GM12878 (cell line): ENCODE measurements at regions of chr20 and their contacts with region 1.

Region 1: GRCh38 chr20:6583134-6583738 is 184.2 kb upstream of the BMP2 start:
- DNase-seq: peak; percentile 25
- ATAC-seq: peak; percentile 96
- H3K4me3 ChIP-seq: no peak overlapping the region
- H3K27ac ChIP-seq: no peak overlapping the region
- H3K4me1 ChIP-seq: no peaks in the 10 kb centered on the region
- H3K27me3 ChIP-seq: no peaks in the 10 kb centered on the region
- CTCF ChIP-seq: peak; percentile 58 to 81 (median 63)
- EP300 ChIP-seq: no peak
- POLR2A ChIP-seq: no peak
- RAD21 ChIP-seq: peak; percentile 63

Region 2: GRCh38 chr20:5788385-5788895 is 794.8 kb before region 1 on chr20:
- CTCF ChIA-PET with region 1: no interaction called
- POLR2A ChIA-PET with region 1: no interaction called
- RAD21 ChIA-PET with region 1: no interaction called
- SMC1A ChIA-PET with region 1: no interaction called
- in situ Hi-C with region 1: no loop called
- intact Hi-C with region 1: no loop called
- DNase-seq: peak; percentile 66
- ATAC-seq: peak; percentile 100
- H3K4me3 ChIP-seq: no peak overlapping the region
- H3K27ac ChIP-seq: no peak overlapping the region
- H3K4me1 ChIP-seq: no peaks in the 10 kb centered on the region
- H3K27me3 ChIP-seq: no peaks in the 10 kb centered on the region
- CTCF ChIP-seq: peak; percentile 76 to 93 (median 87); a peak in 5 of 6 replicates
- EP300 ChIP-seq: no peak
- POLR2A ChIP-seq: no peak
- RAD21 ChIP-seq: peak; percentile 98

Region 3: DNA sequence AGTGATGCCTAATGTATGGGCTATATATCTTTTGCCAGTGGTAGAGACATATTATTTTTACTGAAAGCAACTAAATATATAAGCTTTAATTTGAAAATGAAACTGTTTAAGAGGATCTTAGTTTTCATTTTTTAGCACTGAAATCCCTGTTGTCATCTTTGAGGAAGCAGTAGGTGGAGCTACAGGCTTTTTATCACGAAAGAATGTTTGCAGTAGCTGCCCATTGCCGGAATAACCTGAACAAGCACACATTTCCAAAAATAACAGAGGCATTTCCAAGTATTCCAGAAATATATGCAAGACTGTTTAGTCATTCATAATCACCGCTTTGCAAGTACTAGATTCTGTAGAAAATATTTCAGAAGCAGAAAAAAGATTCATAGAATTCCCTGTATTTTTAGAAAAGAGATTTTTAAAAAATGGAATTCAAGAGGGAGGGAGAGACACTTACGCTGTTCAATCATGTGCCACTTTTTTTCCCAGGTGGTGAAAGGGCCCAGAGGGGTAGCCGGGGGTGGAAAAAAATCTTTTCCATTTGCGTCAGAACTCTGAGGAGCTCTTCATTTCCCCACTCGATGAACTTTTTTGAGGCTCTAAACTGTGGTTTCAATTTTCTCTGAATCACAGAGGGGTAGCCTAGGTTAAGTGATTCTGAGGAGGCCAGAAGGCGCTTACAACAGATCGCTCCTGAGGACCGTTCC is 317.9 kb before region 1 on chr20:
- CTCF ChIA-PET with region 1: interaction called, 10 read pairs
- POLR2A ChIA-PET with region 1: no interaction called
- RAD21 ChIA-PET with region 1: interaction called, 3 read pairs
- SMC1A ChIA-PET with region 1: interaction called, 7 read pairs
- in situ Hi-C with region 1: no loop called
- intact Hi-C with region 1: loop called (anchors 5 kb)
- DNase-seq: no peak
- ATAC-seq: peak; percentile 50; the same call in 2 of the 3 replicates
- H3K4me3 ChIP-seq: no peak overlapping the region
- H3K27ac ChIP-seq: no peak overlapping the region
- H3K4me1 ChIP-seq: no peaks in the 10 kb centered on the region
- H3K27me3 ChIP-seq: no peaks in the 10 kb centered on the region
- CTCF ChIP-seq: peak in 2 of 3 experiments; percentile 6 to 50; a peak in 2 of 6 replicates
- EP300 ChIP-seq: no peak
- POLR2A ChIP-seq: no peak
- RAD21 ChIP-seq: peak; percentile 40

Region 4: DNA sequence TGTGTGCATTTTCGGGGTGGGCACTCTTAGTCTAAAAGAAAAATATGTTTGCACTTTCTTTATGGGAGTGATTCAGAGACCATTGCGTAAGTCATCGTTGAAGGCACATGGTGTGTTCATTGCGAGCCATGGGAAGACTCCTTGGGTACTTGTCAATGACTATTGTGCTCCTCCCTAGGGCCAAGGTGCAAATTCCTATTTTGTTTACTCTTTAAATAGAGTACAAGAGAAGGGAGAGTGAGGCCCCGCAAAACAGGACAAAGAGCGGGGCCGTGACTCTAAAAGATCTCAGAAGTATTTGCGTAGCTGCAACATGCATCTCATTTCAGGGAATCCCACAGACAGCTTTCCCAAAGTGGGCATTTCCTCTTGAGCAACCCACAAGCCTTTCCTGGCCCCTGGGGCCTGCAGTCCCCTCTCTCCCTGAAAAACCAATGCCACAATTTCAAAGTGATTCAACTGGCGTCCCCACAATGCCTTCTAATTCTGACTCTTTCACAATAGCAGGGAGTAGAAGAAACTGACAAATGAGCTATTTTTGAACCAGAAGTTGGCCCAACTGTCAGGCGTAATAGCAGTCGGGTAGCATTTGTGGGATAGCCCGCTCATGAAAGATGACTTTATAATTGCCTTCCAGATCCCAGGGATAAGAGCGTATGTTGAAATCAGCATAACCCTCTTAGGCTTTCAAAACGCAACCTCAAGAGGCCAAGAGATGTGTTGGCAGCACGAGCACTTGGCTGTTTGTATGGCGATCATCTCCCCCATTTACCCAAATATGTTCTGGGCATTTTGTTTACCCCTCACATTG is 93.7 kb before region 1 on chr20:
- CTCF ChIA-PET with region 1: no interaction called
- POLR2A ChIA-PET with region 1: no interaction called
- RAD21 ChIA-PET with region 1: no interaction called
- SMC1A ChIA-PET with region 1: no interaction called
- in situ Hi-C with region 1: no loop called
- intact Hi-C with region 1: no loop called
- DNase-seq: no peak
- ATAC-seq: no peak
- H3K4me3 ChIP-seq: no peak overlapping the region
- H3K27ac ChIP-seq: no peak overlapping the region
- H3K4me1 ChIP-seq: no peaks in the 10 kb centered on the region
- H3K27me3 ChIP-seq: no peaks in the 10 kb centered on the region; a peak in 1 of 4 replicates
- CTCF ChIP-seq: no peak
- EP300 ChIP-seq: no peak
- POLR2A ChIP-seq: no peak
- RAD21 ChIP-seq: no peak

Region 5: DNA sequence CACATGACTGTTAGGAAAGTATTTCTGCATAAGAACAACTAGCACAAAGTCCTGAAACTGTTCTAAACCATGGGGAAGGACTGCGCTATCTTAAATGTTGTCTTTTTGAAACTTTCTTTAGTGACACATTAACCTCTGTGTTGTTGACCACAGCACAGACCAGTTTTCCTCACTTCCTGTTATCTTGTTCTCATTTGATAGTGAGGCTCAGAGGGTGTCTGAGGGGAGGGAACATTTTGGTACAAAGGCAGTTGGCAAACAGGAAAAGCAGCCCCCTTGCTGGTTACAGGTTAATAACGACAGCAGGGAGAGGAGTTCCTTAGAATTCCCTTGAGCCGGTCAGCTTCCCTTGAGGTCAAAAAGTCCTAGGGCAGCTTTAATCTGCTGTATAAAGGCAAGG is 40.8 kb after region 1 on chr20:
- CTCF ChIA-PET with region 1: interaction called, 33 read pairs
- POLR2A ChIA-PET with region 1: no interaction called
- RAD21 ChIA-PET with region 1: interaction called, 15 read pairs
- SMC1A ChIA-PET with region 1: interaction called, 109 read pairs
- in situ Hi-C with region 1: no loop called
- intact Hi-C with region 1: loop called (anchors 2 kb)
- DNase-seq: peak; percentile 66
- ATAC-seq: peak; percentile 96
- H3K4me3 ChIP-seq: no peak overlapping the region
- H3K27ac ChIP-seq: no peak overlapping the region
- H3K4me1 ChIP-seq: no peaks in the 10 kb centered on the region
- H3K27me3 ChIP-seq: no peaks in the 10 kb centered on the region
- CTCF ChIP-seq: no peak
- EP300 ChIP-seq: peak in 1 of 2 experiments; percentile 90; a peak in 3 of 4 replicates
- POLR2A ChIP-seq: no peak
- RAD21 ChIP-seq: no peak

Region 6: DNA sequence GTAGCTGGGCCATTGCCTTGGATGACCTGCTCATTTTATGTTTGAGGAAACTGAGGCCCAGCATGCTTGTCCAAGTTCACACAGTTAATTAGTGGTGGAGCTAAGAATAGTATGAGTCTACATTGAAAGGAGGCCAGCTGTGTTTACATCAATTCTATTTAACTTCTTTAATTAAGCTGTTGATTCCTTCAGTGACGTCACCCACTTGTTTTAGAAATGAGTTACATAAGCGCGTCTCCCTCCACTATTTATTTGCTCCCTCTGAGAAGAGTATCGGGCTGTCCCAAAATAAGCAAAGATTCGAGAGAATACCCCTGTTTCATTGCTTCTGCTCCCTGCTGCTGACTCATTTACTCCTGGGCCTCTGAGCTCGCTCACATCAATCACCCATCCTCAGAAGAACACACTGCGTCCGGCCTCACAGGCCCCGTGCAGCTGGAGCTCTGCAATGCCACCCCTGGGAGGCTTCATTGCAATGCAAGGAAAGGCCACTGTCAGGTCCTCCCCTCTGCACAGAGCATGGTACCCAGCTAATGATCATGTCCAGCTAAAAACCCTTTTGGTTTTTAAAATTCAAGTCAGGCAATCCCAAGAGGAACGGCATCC is 109.4 kb after region 1 on chr20:
- CTCF ChIA-PET with region 1: interaction called, 17 read pairs
- POLR2A ChIA-PET with region 1: no interaction called
- RAD21 ChIA-PET with region 1: interaction called, 6 read pairs
- SMC1A ChIA-PET with region 1: interaction called, 10 read pairs
- in situ Hi-C with region 1: no loop called
- intact Hi-C with region 1: no loop called
- DNase-seq: no peak
- ATAC-seq: peak; percentile 91
- H3K4me3 ChIP-seq: no peak overlapping the region
- H3K27ac ChIP-seq: no peak overlapping the region
- H3K4me1 ChIP-seq: no peaks in the 10 kb centered on the region
- H3K27me3 ChIP-seq: no peaks in the 10 kb centered on the region
- CTCF ChIP-seq: no peak; a peak in 1 of 6 replicates
- EP300 ChIP-seq: no peak
- POLR2A ChIP-seq: no peak
- RAD21 ChIP-seq: no peak

Region 7: DNA sequence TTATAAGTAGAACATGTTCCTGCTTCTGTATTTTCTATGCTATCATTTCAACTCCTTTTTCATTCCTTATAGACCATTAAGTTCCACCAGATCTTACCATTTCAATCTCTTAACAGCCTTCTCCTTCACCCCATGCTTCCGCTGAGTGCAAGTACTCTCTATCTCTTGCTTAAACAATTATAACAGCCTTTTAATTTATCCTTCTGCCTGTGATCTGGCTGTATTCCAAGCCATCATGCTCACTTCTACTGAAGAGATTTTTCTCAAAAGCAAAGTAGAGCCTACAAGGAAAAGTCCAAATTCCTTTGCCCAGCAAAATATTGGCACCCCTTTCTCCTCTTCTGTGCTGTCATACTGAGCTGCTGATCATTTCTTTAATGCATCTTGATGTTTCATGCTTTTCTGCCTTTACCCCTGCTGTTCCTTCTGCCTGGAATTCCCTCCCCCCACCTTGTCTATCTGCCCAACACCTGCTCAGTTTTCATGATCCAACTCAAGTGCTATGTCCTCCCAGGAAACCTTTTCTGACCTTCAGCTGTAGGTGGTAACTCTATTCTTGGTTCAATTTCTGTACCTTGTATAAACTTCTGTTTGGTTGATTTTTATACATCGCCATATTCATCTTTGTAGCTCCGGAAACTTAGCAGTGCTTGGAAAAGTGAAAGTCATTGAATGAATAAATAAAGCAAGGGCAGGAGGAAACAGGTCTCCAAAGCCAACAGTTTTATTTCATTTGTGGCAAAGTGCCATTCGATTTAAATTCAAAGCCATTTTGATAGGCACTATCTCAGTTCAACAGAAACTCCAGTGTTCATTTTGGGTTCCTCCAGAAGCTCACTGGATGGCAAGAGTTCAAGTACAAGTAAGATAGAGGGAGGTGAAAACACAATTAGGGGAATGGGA is 173.7 kb after region 1 on chr20:
- CTCF ChIA-PET with region 1: interaction called, 14 read pairs
- POLR2A ChIA-PET with region 1: no interaction called
- RAD21 ChIA-PET with region 1: interaction called, 14 read pairs
- SMC1A ChIA-PET with region 1: interaction called, 11 read pairs
- in situ Hi-C with region 1: no loop called
- intact Hi-C with region 1: no loop called
- DNase-seq: no peak
- ATAC-seq: no peak
- H3K4me3 ChIP-seq: no peak overlapping the region
- H3K27ac ChIP-seq: no peak overlapping the region
- H3K4me1 ChIP-seq: no peaks in the 10 kb centered on the region
- H3K27me3 ChIP-seq: no peaks in the 10 kb centered on the region
- CTCF ChIP-seq: no peak
- EP300 ChIP-seq: no peak
- POLR2A ChIP-seq: no peak
- RAD21 ChIP-seq: no peak

Region 8: DNA sequence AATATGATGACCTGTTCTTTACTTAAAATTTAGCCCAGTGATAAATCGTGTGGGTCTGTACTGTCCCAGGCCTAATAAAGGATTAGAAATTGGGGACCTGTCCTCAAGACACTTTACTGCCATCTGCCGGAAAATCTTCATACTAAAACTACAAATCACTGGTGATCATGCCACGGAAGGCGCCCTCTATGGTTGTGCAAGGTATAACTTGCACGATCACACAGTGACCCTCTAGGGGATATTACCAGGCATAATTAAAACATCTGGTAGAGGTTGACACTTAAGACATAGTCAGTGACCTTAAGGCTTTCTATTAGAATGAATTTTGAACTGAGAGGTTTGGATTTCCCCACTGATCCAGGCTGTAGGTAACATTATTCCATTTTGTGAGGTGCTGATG is 356.8 kb after region 1 on chr20:
- CTCF ChIA-PET with region 1: interaction called, 8 read pairs
- POLR2A ChIA-PET with region 1: no interaction called
- RAD21 ChIA-PET with region 1: no interaction called
- SMC1A ChIA-PET with region 1: interaction called, 4 read pairs
- in situ Hi-C with region 1: no loop called
- intact Hi-C with region 1: loop called (anchors 10 kb)
- DNase-seq: no peak
- ATAC-seq: peak; percentile 80
- H3K4me3 ChIP-seq: no peak overlapping the region
- H3K27ac ChIP-seq: no peak overlapping the region
- H3K4me1 ChIP-seq: no peaks in the 10 kb centered on the region
- H3K27me3 ChIP-seq: no peaks in the 10 kb centered on the region
- CTCF ChIP-seq: peak; percentile 16 to 61 (median 28); a peak in 4 of 6 replicates
- EP300 ChIP-seq: no peak
- POLR2A ChIP-seq: no peak
- RAD21 ChIP-seq: peak; percentile 16; the same call in 1 of the 2 replicates

Region 9: DNA sequence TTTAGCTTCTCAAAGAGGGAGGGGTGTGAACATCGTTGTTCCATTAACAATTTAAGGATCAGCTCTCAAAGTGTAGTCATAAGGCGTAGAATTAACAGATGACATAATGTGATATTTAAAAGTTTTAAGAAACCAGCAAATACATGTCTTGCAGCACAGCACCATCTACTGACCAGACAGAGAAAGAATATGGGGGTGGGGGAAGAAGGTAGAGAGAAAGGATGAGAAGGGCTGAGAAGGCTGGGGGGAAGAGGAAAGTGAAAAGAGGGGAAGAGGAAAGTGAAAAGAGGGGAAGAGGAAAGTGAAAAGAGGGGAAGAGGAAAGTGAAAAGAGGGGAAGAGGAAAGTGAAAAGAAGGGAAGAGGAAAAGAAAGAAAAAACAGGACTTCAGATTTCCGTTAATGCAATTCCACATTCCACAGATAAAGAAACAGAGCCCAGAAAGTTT is 1276.1 kb after region 1 on chr20:
- CTCF ChIA-PET with region 1: no interaction called
- POLR2A ChIA-PET with region 1: no interaction called
- RAD21 ChIA-PET with region 1: interaction called, 4 read pairs
- SMC1A ChIA-PET with region 1: no interaction called
- in situ Hi-C with region 1: no loop called
- intact Hi-C with region 1: loop called (anchors 5 kb)
- DNase-seq: peak; percentile 8
- ATAC-seq: peak; percentile 68
- H3K4me3 ChIP-seq: no peak overlapping the region
- H3K27ac ChIP-seq: no peak overlapping the region
- H3K4me1 ChIP-seq: no peaks in the 10 kb centered on the region
- H3K27me3 ChIP-seq: no peaks in the 10 kb centered on the region
- CTCF ChIP-seq: peak; percentile 50 to 66 (median 51); a peak in 5 of 6 replicates
- EP300 ChIP-seq: no peak
- POLR2A ChIP-seq: no peak
- RAD21 ChIP-seq: peak; percentile 93